ENCODE measurements at regions of chr2 and their contacts with region 1.

Region 1: DNA sequence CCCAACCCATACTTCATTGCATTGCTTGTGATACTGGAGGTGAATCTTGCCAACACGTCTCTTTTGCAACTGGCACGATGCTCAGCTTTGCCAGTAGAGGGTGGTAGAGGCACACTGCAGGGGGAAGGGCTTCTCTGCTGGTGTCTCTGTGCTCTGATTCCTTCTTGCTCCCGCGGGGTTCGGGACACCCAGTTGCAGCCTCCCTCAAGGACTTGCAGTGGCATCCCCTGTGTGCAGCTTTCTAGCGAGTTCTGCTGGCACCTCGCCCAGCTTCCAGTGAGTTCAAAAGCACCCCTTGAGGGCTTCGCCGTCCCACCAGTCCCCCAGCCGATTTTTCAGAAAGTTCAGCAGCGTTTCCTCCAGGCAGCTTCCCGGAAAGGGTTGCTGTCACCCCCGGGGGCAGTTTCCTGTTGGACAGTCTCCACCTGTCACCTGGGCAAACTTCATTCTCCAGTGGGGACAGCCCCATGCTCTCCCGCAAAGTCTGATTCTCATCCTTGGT is 35.3 kb upstream of the EN1 start:
- DNase-seq: peak; percentile 34 to 66
- ATAC-seq: peak; percentile 82 to 90
- H3K4me3 ChIP-seq: peak overlapping the region; percentile 36; the same call in 2 of the 3 replicates
- H3K27ac ChIP-seq: peak overlapping the region in 1 of 2 experiments; percentile 56; a peak in 2 of 6 replicates
- H3K4me1 ChIP-seq: no peaks in the 10 kb centered on the region
- CTCF ChIP-seq: peak; percentile 67
- EP300 ChIP-seq: no peak
- POLR2A ChIP-seq: no peak
- RAD21 ChIP-seq: peak; percentile 75 to 86

Region 2: DNA sequence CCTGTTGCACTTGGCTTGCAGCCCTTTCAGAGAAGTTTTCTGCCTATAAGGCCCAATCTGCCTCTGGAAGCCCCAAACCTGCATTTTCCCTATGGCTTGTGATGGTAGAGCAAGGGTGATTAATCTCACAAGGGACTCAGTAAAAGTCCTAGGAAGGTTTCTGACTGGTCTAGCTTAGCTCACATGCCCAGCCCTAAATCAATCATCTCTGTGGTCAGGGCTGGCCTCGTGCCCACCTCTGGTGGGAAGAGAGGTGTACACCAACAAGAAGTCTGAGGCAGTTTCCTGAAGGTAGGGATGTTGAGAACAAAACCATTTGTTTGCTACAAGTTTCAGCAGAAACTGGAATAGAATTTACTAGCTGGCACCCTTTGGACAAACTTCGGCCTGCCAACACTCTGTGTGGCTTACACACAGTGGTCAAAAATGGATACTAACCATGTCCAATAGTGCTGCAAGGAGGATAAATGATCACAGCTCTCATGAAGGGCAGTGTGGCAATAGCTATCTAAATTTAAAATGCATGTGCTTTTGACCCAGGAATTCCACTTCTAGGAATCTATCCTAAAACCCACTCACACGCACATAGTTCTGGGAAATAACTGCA is 131.7 kb before region 1 on chr2:
- CTCF ChIA-PET with region 1: no interaction called
- POLR2A ChIA-PET with region 1: no interaction called
- DNase-seq: no peak
- ATAC-seq: no peak
- H3K4me3 ChIP-seq: no peak overlapping the region
- H3K27ac ChIP-seq: no peak overlapping the region
- H3K4me1 ChIP-seq: no peaks in the 10 kb centered on the region
- CTCF ChIP-seq: no peak
- EP300 ChIP-seq: no peak
- POLR2A ChIP-seq: no peak
- RAD21 ChIP-seq: no peak

Region 3: GRCh38 chr2:118903551-118904479 is 21.1 kb after region 1 on chr2:
- CTCF ChIA-PET with region 1: interaction called, 17 read pairs
- POLR2A ChIA-PET with region 1: no interaction called
- DNase-seq: no peak
- ATAC-seq: no peak
- H3K4me3 ChIP-seq: no peak overlapping the region
- H3K27ac ChIP-seq: no peak overlapping the region
- H3K4me1 ChIP-seq: no peaks in the 10 kb centered on the region
- CTCF ChIP-seq: no peak
- EP300 ChIP-seq: no peak
- POLR2A ChIP-seq: no peak
- RAD21 ChIP-seq: no peak

Region 4: DNA sequence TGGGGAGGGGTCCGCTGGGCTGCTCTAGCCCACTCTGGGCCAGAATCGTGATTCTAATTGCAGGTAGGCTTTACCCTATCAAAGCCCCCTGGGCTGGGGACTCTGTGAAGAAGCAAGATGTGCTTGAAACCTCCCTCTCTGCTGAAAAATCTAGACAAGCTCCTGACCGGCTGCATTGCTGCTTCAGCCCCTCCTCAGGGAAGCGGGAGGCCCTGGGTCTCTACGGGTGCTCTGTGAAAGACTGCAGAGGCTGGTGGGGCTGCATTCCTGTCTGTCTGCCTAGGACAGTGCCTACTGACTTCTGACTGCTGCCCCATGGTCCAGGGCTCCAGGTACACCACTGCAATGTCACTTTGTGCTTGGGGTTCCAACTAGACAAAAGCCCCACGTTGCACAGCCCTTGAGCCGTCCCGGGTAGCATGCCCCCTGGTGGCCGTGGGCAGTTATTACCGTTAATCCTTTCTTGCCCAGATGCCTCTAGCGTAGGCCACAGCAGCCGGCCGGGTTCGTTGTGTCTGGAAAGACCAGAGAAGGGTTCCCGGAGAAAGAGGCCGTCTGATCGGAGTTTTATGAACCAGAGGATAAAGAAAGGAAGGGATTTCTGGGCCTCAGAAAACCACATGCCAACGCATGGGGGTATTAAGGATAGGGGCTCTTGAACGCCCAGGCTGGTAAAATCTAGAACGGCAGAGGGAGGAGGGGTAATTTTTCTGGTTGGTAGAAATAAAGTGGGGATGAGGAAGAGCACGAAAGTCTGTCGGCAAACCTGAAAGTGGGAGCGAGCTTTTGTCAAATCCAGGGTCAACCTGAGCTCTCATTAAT is 291.7 kb after region 1 on chr2:
- CTCF ChIA-PET with region 1: interaction called, 25 read pairs
- POLR2A ChIA-PET with region 1: no interaction called
- DNase-seq: peak; percentile 41 to 58
- ATAC-seq: peak; percentile 79 to 96; a peak in 5 of 6 replicates
- H3K4me3 ChIP-seq: no peak overlapping the region
- H3K27ac ChIP-seq: no peak overlapping the region
- H3K4me1 ChIP-seq: 0 out of 3 replicates have a peak, but pooled peaks cover 2% of the 10 kb centered on the region
- CTCF ChIP-seq: peak; percentile 65
- EP300 ChIP-seq: no peak
- POLR2A ChIP-seq: no peak
- RAD21 ChIP-seq: peak; percentile 52 to 53; a peak in 3 of 5 replicates

Region 5: DNA sequence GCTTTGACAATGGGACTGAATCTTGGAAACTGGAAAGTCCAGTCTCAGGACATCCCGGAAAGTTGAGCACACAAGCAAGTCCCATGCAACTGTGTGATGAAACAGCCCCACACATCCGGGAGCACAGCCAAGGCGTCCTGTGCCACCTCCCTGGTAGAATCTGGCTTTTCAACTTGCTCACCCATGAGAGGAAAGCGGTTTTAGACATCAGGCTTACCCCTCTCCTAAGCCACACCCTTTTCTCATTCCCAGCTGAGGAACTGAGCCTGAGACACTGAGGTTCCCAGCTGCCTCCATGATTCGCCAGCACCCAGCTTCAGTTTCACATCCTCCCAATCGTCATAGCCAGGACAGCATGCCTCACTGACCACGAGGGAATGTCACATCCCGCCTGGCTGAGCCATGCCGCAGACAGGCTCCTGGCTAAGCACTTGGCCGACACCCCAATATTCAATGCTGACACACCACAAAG is 401.1 kb after region 1 on chr2:
- CTCF ChIA-PET with region 1: interaction called, 100 read pairs
- POLR2A ChIA-PET with region 1: no interaction called
- DNase-seq: no peak
- ATAC-seq: no peak
- H3K4me3 ChIP-seq: no peak overlapping the region
- H3K27ac ChIP-seq: no peak overlapping the region
- H3K4me1 ChIP-seq: no peaks in the 10 kb centered on the region
- CTCF ChIP-seq: no peak
- EP300 ChIP-seq: no peak
- POLR2A ChIP-seq: no peak
- RAD21 ChIP-seq: no peak

Region 6: DNA sequence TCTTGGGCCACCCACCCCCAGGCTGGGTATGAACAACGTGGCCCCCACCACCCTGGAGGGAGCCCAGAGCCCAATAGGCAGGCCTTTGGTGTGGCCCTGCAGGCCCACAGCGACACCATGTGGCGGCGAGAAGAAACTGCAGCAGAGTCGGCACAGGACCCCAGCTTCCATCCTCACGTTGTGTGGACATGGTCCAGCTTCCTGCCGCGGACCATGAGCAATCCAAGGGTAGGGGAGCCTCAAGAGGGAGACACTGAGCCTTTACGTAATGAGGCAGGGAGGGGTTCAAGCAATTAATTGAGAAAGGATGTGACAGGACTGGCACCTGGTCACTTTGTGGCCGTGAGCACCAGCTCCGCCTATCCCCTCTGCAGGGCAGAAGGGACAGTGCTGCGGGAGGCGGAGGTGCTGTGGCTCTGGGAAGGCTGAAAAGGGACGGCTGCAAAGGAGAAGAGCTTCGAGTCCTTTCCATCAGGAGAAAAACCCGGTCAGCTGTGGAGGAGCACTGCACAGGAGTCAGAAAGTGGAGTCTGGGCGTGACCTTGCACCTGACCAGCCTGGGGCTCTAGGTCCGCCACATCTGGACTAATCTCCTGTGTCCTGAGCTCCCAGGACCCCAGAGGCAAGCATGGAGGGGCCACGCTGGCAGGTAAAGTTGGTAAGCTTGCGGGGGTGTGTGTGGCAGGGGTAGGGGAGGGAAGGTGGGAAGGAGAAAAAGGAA is 593.7 kb after region 1 on chr2:
- CTCF ChIA-PET with region 1: interaction called, 14 read pairs
- POLR2A ChIA-PET with region 1: no interaction called
- DNase-seq: peak; percentile 57 to 74
- ATAC-seq: peak; percentile 86 to 95
- H3K4me3 ChIP-seq: 0 out of 3 replicates have a peak overlapping the region, but pooled peaks have one; percentile 25
- H3K27ac ChIP-seq: peak overlapping the region; percentile 29 to 67; a peak in 3 of 6 replicates
- H3K4me1 ChIP-seq: peaks cover 4% of the 10 kb centered on the region; the same call in 1 of the 3 replicates
- CTCF ChIP-seq: peak; percentile 95
- EP300 ChIP-seq: no peak
- POLR2A ChIP-seq: no peak
- RAD21 ChIP-seq: peak; percentile 92 to 96

Measured in A549 (cell line).